ENCODE measurements at regions of chrX and their contacts with region 1.

Region 1: GRCh38 chrX:119753571-119754257 is 4.7 kb upstream of the SOWAHD start:
- H3K4me3 ChIP-seq: no peak overlapping the region
- H3K27ac ChIP-seq: no peak overlapping the region
- H3K4me1 ChIP-seq: 0 out of 2 replicates have a peak, but pooled peaks cover 2% of the 10 kb centered on the region
- CTCF ChIP-seq: peak; percentile 48

Region 2: GRCh38 chrX:119693040-119693995 is 60.4 kb before region 1 on chrX and contains the start of gene SEPTIN6:
- CTCF ChIA-PET with region 1: interaction called, 3 read pairs
- POLR2A ChIA-PET with region 1: interaction called, 13 read pairs
- H3K4me3 ChIP-seq: peak within 1 kb of the TSS; percentile 71
- H3K27ac ChIP-seq: peak within 1 kb of the TSS; percentile 60; the same call in 1 of the 2 replicates
- H3K4me1 ChIP-seq: peaks cover 2% of the 10 kb centered on the region; the same call in 1 of the 2 replicates
- CTCF ChIP-seq: peak; percentile 45

Region 3: GRCh38 chrX:119763836-119764387 is 10.2 kb after region 1 on chrX:
- CTCF ChIA-PET with region 1: interaction called, 11 read pairs
- POLR2A ChIA-PET with region 1: interaction called, 6 read pairs
- H3K4me3 ChIP-seq: no peak overlapping the region
- H3K27ac ChIP-seq: no peak overlapping the region
- H3K4me1 ChIP-seq: no peaks in the 10 kb centered on the region
- CTCF ChIP-seq: no peak